ENCODE measurements at regions of chr22 and their contacts with region 1.

Region 1: DNA sequence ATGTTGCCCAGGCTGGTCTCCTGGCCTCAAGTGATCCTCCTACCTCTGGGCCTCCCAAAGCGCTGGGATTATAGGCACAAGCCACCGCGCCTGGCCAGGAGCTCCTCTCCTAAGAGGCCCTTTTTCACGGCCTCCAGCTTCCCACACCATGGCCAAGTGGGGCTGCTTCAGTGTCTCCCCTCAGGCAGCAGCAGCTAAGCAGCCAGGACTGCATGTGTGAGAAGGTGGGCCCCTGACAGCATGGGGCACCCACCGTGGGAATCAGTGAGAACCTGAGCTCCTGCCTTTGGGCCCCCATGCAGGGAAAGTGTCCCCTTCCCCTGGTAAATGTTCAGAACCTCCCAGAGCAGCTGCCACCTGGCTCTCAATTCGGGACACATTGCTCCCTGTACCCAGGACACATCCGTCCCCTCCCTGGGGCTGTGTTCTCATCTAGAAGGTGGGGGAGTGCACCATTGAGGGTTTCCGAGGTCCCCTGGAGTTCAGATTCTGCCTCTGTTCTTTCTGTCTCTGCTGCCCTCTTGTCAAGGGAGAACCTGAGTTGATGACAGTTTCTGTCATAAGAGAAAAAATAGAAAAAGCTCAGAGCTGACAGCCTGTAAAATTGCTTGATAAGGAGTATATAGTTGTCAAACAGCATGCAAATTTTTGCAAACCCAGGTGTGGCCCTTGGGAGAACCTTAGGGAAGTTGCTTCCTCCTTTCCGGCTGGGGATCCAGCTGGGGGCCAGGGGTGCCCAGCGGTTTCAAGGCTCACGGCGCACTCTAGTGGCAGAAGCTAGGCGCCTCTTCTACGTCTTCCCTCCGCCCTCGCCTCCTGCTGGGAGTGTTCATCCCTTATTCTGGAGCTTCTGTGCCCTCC is 29.7 kb downstream of the FAM83F start:
- DNase-seq: peak; percentile 38 to 82 (median 61)
- ATAC-seq: peak; percentile 74 to 92 (median 88)
- H3K4me3 ChIP-seq: no peak overlapping the region
- H3K27ac ChIP-seq: no peak overlapping the region
- H3K4me1 ChIP-seq: no peaks in the 10 kb centered on the region
- H3K27me3 ChIP-seq: no peaks in the 10 kb centered on the region
- CTCF ChIP-seq: peak; percentile 26 to 82 (median 63)

Region 2: GRCh38 chr22:39534591-39535356 is 489.7 kb before region 1 on chr22:
- intact Hi-C with region 1: loop called in 2 of 3 experiments (anchors 5 kb)
- DNase-seq: peak; percentile 73 to 97 (median 88)
- ATAC-seq: peak; percentile 38 to 55 (median 47)
- H3K4me3 ChIP-seq: no peak overlapping the region
- H3K27ac ChIP-seq: peak overlapping the region in 2 of 4 donors; percentile 32 to 41
- H3K4me1 ChIP-seq: peaks cover 3 to 22% (median 14%) of the 10 kb centered on the region in 3 donors
- H3K27me3 ChIP-seq: no peaks in the 10 kb centered on the region
- CTCF ChIP-seq: peak; percentile 78 to 95 (median 91)

Region 3: DNA sequence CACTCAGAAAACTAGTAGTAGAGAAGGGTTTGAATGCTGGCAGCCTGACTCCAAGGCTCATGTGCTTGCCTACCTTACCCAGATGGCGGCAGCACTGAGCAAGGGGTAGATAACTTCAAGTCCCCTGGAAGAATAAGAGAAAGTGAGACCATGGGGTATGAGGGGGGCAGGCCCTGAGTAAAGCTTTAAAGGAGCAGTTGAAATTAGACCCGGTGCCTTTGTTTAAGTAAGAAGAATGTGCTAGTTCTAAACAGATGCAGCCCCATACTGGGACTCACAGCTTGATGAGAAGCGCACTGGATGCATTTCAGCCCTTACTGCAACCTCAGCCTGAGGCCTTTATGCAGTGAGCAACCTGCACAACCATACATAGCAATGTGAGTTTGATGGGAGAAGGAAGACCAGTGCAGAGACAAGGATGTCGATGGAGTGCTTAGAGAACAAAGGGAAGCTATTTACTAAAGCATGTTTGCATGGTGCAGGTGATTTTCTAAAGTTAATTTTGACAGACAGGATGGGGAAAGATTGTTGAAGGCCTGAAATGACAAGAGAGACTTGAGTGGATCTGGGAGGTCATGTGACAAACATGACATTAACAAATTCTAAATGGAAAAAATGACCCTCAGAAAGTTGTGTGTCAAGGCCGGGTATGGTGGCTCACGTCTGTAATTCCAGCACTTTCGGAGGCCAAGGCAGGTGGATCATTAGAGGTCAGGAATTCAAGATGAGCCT is 91.3 kb before region 1 on chr22:
- intact Hi-C with region 1: loop called in 1 of 3 experiments (anchors 10 kb)
- DNase-seq: peak in 4 of 6 donors; percentile 24 to 74 (median 48)
- ATAC-seq: peak in 3 of 4 donors; percentile 66 to 79 (median 76)
- H3K4me3 ChIP-seq: no peak overlapping the region
- H3K27ac ChIP-seq: no peak overlapping the region
- H3K4me1 ChIP-seq: no peaks in the 10 kb centered on the region
- H3K27me3 ChIP-seq: no peaks in the 10 kb centered on the region
- CTCF ChIP-seq: peak; percentile 47 to 65 (median 54)

Region 4: GRCh38 chr22:40157330-40157945 is 133.0 kb after region 1 on chr22:
- intact Hi-C with region 1: no loop called
- DNase-seq: no peak
- ATAC-seq: peak in 2 of 4 donors; percentile 5 to 24
- H3K4me3 ChIP-seq: no peak overlapping the region
- H3K27ac ChIP-seq: peak overlapping the region in 1 of 4 donors; percentile 33
- H3K4me1 ChIP-seq: peaks cover 8 to 26% (median 10%) of the 10 kb centered on the region in 3 donors
- H3K27me3 ChIP-seq: no peaks in the 10 kb centered on the region
- CTCF ChIP-seq: no peak